ENCODE measurements at regions of chr6 and their contacts with region 1.

Region 1: GRCh38 chr6:145151624-145152023 is 583.7 kb downstream of the EPM2A start:
- DNase-seq: no peak
- H3K4me3 ChIP-seq: no peak overlapping the region
- H3K27ac ChIP-seq: no peak overlapping the region
- H3K4me1 ChIP-seq: peaks cover 0 to 23% (median 8%) of the 10 kb centered on the region in 4 donors
- H3K27me3 ChIP-seq: no peaks in the 10 kb centered on the region
- CTCF ChIP-seq: no peak
- EP300 ChIP-seq: no peak
- POLR2A ChIP-seq: no peak

Region 2: GRCh38 chr6:144140867-144141266 is 1010.8 kb before region 1 on chr6:
- intact Hi-C with region 1: no loop called
- DNase-seq: no peak
- H3K4me3 ChIP-seq: no peak overlapping the region
- H3K27ac ChIP-seq: no peak overlapping the region
- H3K4me1 ChIP-seq: no peaks in the 10 kb centered on the region
- H3K27me3 ChIP-seq: no peaks in the 10 kb centered on the region
- CTCF ChIP-seq: no peak
- EP300 ChIP-seq: no peak
- POLR2A ChIP-seq: no peak

Region 3: GRCh38 chr6:145206247-145206907 is 54.8 kb after region 1 on chr6:
- intact Hi-C with region 1: loop called (anchors 5 kb)
- DNase-seq: no peak
- H3K4me3 ChIP-seq: no peak overlapping the region
- H3K27ac ChIP-seq: no peak overlapping the region
- H3K4me1 ChIP-seq: no peaks in the 10 kb centered on the region
- H3K27me3 ChIP-seq: no peaks in the 10 kb centered on the region
- CTCF ChIP-seq: no peak
- EP300 ChIP-seq: no peak
- POLR2A ChIP-seq: no peak